T-cell (primary cell): ENCODE measurements at regions of chr16 and their contacts with region 1.

Region 1: DNA sequence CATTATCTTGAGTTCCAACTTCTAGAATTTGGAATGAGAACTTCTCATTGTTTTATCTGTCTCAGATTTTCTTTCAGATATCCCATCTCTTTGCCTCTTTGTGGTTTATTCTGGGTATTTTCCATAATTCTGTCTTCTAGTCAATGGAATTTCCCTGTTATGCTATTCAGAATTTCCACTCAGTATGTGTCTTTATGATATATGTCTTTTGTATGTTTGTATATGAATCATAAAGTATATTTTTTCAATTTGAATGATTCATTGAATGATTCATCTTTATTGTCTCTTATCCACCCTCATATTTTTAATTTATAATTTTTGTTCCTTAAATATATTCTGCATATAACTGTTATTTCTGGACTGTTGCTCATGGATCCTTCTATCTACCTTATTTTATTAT is 729.7 kb upstream of the GOT2 start:
- DNase-seq: no peak
- ATAC-seq: no peak
- H3K4me3 ChIP-seq: no peak overlapping the region
- H3K4me3 Mint-ChIP-seq: no peak overlapping the region
- H3K27ac ChIP-seq: no peak overlapping the region
- H3K27ac Mint-ChIP-seq: no peak overlapping the region
- H3K4me1 ChIP-seq: no peaks in the 10 kb centered on the region
- H3K4me1 Mint-ChIP-seq: no peaks in the 10 kb centered on the region
- H3K27me3 ChIP-seq: no peaks in the 10 kb centered on the region
- H3K27me3 Mint-ChIP-seq: no peaks in the 10 kb centered on the region

Region 2: DNA sequence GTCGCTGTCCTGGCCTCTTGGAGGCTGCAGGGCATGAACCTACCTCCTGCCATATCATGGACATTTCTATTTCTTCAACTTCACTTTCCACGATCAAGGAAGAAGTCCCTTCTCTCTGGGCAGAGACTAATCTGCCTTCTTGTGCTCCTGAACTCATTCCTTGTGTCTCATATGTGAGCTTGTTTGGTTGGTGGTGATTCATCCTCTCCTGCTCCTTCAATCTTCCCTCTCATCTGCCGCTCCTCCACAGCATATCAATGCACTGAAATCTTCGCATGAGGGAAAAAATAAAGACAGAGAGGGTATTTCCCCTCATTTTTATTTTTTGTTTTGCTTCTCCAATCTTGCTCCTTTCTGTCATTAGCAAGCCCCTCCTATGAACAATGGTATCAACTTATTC is 157.9 kb before region 1 on chr16:
- CTCF ChIA-PET with region 1: interaction called in 1 of 2 experiments, 10 read pairs
- POLR2A ChIA-PET with region 1: no interaction called
- DNase-seq: no peak
- ATAC-seq: no peak
- H3K4me3 ChIP-seq: no peak overlapping the region
- H3K4me3 Mint-ChIP-seq: no peak overlapping the region
- H3K27ac ChIP-seq: no peak overlapping the region
- H3K27ac Mint-ChIP-seq: no peak overlapping the region
- H3K4me1 ChIP-seq: no peaks in the 10 kb centered on the region
- H3K4me1 Mint-ChIP-seq: no peaks in the 10 kb centered on the region
- H3K27me3 ChIP-seq: no peaks in the 10 kb centered on the region
- H3K27me3 Mint-ChIP-seq: no peaks in the 10 kb centered on the region